Panc1 (cell line): ENCODE measurements at regions of chr5 and their contacts with region 1.

Region 1: GRCh38 chr5:14331386-14331781 is 188.2 kb downstream of the TRIO start:
- DNase-seq: no peak
- ATAC-seq: no peak
- H3K4me3 ChIP-seq: no peak overlapping the region
- H3K27ac ChIP-seq: no peak overlapping the region
- H3K4me1 ChIP-seq: peaks cover 9% of the 10 kb centered on the region
- H3K27me3 ChIP-seq: no peaks in the 10 kb centered on the region
- CTCF ChIP-seq: no peak

Region 2: DNA sequence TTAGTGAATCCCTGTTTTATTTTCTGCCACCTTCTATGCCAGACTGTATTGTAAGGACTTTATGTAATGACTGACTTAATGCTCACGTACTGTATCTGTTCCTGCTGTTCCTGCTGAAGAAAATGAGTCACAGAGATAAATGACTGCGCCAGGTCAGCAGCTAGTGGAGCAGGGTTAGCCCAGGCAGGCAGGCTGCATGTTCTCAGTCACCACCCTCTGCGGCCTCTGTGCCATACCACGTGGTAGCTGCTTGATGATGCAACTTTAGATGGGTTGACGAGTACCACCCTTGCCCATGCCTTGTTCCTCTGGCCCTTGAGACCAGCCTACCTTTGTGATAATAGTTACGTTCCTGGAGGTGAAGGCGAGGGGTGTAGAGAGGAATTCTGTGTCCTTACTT is 26.3 kb before region 1 on chr5:
- CTCF ChIA-PET with region 1: no interaction called
- POLR2A ChIA-PET with region 1: interaction called, 10 read pairs
- in situ Hi-C with region 1: no loop called
- intact Hi-C with region 1: no loop called
- DNase-seq: peak; percentile 93
- ATAC-seq: peak; percentile 84
- H3K4me3 ChIP-seq: no peak overlapping the region
- H3K27ac ChIP-seq: peak overlapping the region; percentile 74
- H3K4me1 ChIP-seq: peaks cover 25% of the 10 kb centered on the region
- H3K27me3 ChIP-seq: no peaks in the 10 kb centered on the region
- CTCF ChIP-seq: no peak

Region 3: GRCh38 chr5:14617441-14617840 is 286.1 kb after region 1 on chr5:
- CTCF ChIA-PET with region 1: no interaction called
- POLR2A ChIA-PET with region 1: interaction called, 12 read pairs
- in situ Hi-C with region 1: no loop called
- intact Hi-C with region 1: no loop called
- DNase-seq: no peak
- ATAC-seq: no peak
- H3K4me3 ChIP-seq: no peak overlapping the region
- H3K27ac ChIP-seq: no peak overlapping the region
- H3K4me1 ChIP-seq: no peaks in the 10 kb centered on the region
- H3K27me3 ChIP-seq: peaks cover 13% of the 10 kb centered on the region; the same call in 1 of the 2 replicates
- CTCF ChIP-seq: no peak